ENCODE measurements at regions of chr7 and their contacts with region 1.

Region 1: DNA sequence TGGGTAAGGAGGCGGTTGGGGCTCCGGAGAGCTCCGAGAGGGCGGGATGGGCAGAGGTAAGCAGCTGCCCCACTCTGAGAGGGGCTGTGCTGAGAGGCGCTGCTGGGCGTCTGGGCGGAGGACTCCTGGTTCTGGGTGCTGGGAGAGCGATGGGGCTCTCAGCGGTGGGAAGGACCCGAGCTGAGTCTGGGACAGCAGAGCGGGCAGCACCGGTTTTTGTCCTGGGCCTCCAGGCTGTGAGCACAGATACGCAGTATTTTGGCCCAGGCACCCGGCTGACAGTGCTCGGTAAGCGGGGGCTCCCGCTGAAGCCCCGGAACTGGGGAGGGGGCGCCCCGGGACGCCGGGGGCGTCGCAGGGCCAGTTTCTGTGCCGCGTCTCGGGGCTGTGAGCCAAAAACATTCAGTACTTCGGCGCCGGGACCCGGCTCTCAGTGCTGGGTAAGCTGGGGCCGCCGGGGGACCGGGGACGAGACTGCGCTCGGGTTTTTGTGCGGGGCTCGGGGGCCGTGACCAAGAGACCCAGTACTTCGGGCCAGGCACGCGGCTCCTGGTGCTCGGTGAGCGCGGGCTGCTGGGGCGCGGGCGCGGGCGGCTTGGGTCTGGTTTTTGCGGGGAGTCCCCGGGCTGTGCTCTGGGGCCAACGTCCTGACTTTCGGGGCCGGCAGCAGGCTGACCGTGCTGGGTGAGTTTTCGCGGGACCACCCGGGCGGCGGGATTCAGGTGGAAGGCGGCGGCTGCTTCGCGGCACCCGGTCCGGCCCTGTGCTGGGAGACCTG is 26.0 kb downstream of the PRSS2 start:
- DNase-seq: no peak
- H3K4me3 Mint-ChIP-seq: peak overlapping the region; percentile 99
- H3K27ac Mint-ChIP-seq: peak overlapping the region; percentile 89
- H3K4me1 Mint-ChIP-seq: peaks cover 70% of the 10 kb centered on the region
- H3K27me3 Mint-ChIP-seq: no peaks in the 10 kb centered on the region

Region 2: GRCh38 chr7:142352543-142352942 is 444.3 kb before region 1 on chr7:
- CTCF ChIA-PET with region 1: no interaction called
- POLR2A ChIA-PET with region 1: interaction called, 23 read pairs
- DNase-seq: no peak
- H3K4me3 Mint-ChIP-seq: peak overlapping the region; percentile 66
- H3K27ac Mint-ChIP-seq: peak overlapping the region; percentile 56
- H3K4me1 Mint-ChIP-seq: peaks cover 23% of the 10 kb centered on the region
- H3K27me3 Mint-ChIP-seq: peaks cover 2% of the 10 kb centered on the region

Region 3: GRCh38 chr7:142535123-142535779 is 261.5 kb before region 1 on chr7:
- CTCF ChIA-PET with region 1: no interaction called
- POLR2A ChIA-PET with region 1: interaction called, 17 read pairs
- DNase-seq: peak; percentile 83
- H3K4me3 Mint-ChIP-seq: peak overlapping the region; percentile 17
- H3K27ac Mint-ChIP-seq: peak overlapping the region; percentile 63
- H3K4me1 Mint-ChIP-seq: peaks cover 31% of the 10 kb centered on the region
- H3K27me3 Mint-ChIP-seq: peaks cover 5% of the 10 kb centered on the region

Region 4: DNA sequence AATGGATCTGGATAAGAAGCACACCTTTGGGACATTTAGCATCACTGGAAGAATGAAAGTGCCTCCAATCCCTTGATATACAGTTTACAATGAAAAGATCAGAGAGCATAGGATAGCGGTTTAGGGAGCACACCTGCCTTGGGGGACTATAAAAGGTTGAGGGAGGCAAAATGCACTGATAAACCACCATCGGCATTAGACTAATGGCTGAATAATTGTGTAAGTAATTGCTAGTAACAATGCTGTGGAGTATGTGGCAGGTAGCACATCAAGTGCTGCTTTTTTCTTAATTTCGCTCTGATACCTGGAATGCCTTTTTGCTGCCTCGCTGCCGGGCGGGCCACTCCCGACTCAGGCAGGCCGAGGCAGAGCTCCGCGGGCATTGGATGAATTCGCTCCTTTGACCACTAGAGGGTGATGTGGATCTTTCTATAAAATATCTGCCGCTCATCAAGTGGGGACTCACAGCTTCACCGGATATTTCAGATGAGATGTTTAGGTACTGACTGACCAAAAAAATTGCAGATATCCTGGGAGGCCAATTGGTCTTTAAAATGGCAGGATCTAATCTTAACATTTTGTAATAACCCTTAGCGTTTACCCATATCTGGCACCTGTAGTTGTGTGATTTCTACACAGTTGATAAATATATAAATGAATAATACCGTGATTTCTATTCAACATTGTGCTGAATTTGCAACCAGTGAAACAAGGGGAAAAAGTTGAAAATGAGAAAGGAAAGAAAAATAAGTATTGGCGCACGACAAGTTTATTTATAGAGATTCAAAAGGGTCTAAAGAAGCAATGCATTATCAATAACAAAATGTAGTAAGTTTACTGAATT is 164.3 kb before region 1 on chr7:
- CTCF ChIA-PET with region 1: interaction called, 3 read pairs
- POLR2A ChIA-PET with region 1: interaction called, 22 read pairs
- DNase-seq: peak; percentile 60
- H3K4me3 Mint-ChIP-seq: no peak overlapping the region
- H3K27ac Mint-ChIP-seq: peak overlapping the region; percentile 29
- H3K4me1 Mint-ChIP-seq: peaks cover 13% of the 10 kb centered on the region
- H3K27me3 Mint-ChIP-seq: peaks cover 15% of the 10 kb centered on the region

Region 5: DNA sequence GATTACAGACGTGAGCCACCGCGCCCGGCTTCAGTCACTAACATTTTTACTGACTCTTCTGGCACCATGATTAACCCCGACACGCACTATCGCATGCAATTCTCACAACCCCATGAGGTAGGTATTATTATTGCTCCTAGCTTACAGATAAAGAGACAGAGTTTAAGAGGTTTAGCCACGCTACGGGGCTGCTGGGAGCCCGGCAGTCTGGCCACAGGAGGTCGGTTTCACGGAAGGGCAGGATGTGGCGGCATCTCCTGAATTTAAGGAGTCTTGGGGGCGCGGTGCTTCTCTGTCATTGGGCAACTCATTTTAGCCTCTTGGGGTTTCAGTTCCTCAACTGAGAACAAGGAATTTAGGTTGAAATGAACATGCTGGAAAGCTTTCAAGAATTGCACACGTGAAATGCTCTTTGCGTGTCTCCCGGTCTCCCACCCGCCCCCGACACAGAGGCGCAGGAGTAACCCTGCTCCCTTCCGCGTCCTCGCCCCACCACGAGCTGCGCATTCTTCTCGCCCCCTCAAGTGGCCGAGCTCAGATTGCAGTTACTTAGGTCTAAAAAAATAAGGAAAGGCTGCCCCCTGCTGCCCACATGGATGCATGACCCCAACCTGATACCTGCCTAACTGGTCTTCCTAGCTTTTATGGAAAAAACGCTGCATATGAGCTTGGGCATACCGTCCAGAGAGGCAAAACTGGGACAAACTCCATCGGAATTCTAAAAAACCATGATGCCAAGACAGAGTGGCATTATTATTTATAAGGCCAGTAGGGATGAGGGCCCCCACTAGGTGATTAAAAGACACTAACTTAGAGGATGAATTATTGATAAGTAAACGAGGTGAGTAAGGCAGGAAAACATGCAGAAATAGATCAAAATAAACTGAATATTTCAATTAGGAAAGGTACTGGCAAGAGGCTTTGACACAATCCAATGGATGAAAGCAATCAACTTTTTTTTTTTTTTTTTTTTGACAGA is 13.6 kb before region 1 on chr7:
- CTCF ChIA-PET with region 1: interaction called, 38 read pairs
- POLR2A ChIA-PET with region 1: interaction called, 2,273 read pairs
- DNase-seq: peak; percentile 84
- H3K4me3 Mint-ChIP-seq: peak overlapping the region; percentile 64
- H3K27ac Mint-ChIP-seq: peak overlapping the region; percentile 89
- H3K4me1 Mint-ChIP-seq: peaks cover 22% of the 10 kb centered on the region
- H3K27me3 Mint-ChIP-seq: no peaks in the 10 kb centered on the region

Measured in activated CD4-positive, alpha-beta memory T cell treated with anti-CD3 and anti-CD28 coated beads, Interleukin-2, amount 10 ng/mL, durations not matched to agents 7 days and 5 days (primary cell).